Activated T-helper 2 cell treated with anti-CD3 and anti-CD28 coated beads, Interferon-gamma antibody, Interleukin-2, Interleukin-4, amounts not matched to agents 10 μg/mL and 5 μg/mL and 100 μg/mL, durations not matched to agents 14 hours and 24 hours and 36 hours (primary cell): ENCODE measurements at regions of chr19 and their contacts with region 1.

Region 1: DNA sequence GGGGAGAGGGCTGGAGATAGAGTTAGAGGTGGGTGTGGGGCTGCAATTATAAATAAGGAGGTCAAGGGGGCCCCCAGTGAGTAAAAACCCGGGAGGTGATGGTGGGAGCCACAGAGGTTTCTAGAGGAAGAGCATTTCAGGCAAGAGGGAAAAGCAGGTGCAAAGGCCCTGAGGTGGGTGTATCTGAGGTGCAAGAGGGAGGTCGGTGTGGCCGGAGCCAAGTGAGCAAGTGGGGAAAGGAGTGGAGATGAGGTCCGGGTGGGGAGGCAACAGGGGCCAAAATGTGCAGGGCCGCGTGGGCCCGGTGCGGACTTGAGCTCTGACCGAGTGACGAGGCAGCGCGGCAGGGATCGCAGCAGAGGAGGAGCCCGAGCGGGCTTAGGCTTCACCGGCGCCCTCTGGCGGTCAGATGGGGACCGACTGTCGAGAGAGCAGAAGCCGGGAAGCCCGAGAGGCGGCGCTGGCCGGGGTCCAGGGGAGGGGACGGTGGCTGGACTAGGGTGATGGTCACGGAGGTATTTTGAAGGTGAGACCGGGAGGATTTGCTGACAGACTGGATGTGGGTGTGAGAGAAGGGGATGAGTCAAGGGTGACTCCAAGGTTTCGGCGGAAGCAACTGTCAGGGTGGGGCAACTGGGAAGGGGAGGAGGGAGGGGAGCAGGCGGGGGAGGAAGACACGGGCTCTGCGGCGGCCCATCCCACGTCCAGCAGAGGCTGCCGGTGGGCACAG is 17.7 kb upstream of the SPACA4 start:
- DNase-seq: peak; percentile 80
- H3K4me3 Mint-ChIP-seq: peak overlapping the region; percentile 72
- H3K27ac Mint-ChIP-seq: peak overlapping the region; percentile 52
- H3K4me1 Mint-ChIP-seq: peaks cover 22% of the 10 kb centered on the region
- H3K27me3 Mint-ChIP-seq: peaks cover 4% of the 10 kb centered on the region

Region 2: GRCh38 chr19:48492925-48493717 is 95.7 kb before region 1 on chr19:
- intact Hi-C with region 1: loop called (anchors 1 kb)
- DNase-seq: peak; percentile 80
- H3K4me3 Mint-ChIP-seq: peak overlapping the region; percentile 72
- H3K27ac Mint-ChIP-seq: peak overlapping the region; percentile 23
- H3K4me1 Mint-ChIP-seq: peaks cover 22% of the 10 kb centered on the region
- H3K27me3 Mint-ChIP-seq: peaks cover 40% of the 10 kb centered on the region

Region 3: GRCh38 chr19:48506138-48506733 is 82.6 kb before region 1 on chr19:
- intact Hi-C with region 1: loop called (anchors 1 kb)
- DNase-seq: no peak
- H3K4me3 Mint-ChIP-seq: no peak overlapping the region
- H3K27ac Mint-ChIP-seq: no peak overlapping the region
- H3K4me1 Mint-ChIP-seq: peaks cover 15% of the 10 kb centered on the region
- H3K27me3 Mint-ChIP-seq: no peaks in the 10 kb centered on the region

Region 4: GRCh38 chr19:48518207-48518606 is 70.6 kb before region 1 on chr19:
- intact Hi-C with region 1: no loop called
- DNase-seq: no peak
- H3K4me3 Mint-ChIP-seq: no peak overlapping the region
- H3K27ac Mint-ChIP-seq: no peak overlapping the region
- H3K4me1 Mint-ChIP-seq: peaks cover 3% of the 10 kb centered on the region
- H3K27me3 Mint-ChIP-seq: no peaks in the 10 kb centered on the region